Heart right ventricle (tissue), 16 donors: ENCODE measurements at regions of chr12 and their contacts with region 1.

Region 1: GRCh38 chr12:96587691-96588090 is 98.3 kb downstream of the CFAP54 start:
- DNase-seq: no peak
- ATAC-seq: no peak
- H3K4me3 ChIP-seq: no peak overlapping the region
- H3K27ac ChIP-seq: no peak overlapping the region
- H3K4me1 ChIP-seq: no peaks in the 10 kb centered on the region
- H3K27me3 ChIP-seq: no peaks in the 10 kb centered on the region
- CTCF ChIP-seq: no peak

Region 2: DNA sequence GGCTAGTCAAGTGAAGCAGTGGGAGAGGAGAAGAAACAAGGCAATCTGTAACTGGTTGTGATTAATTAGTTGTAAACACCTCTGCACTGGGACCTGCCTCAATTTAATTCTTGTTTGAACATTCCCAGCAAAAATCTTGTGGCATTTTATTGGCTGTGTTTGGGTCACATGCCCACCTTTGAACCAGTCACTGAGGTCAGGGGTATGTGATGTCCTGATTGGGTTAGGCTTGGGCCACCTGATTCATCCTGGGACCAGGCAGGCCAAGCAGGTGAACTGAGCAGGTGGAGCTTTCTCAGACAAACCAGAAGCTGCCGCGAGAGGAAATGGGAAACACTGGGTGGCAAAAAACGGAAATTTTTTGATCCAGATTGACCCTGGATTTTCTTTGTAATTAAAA is 391.8 kb after region 1 on chr12:
- intact Hi-C with region 1: loop called in 4 of 10 experiments (anchors 5 to 10 kb)
- DNase-seq: no peak
- ATAC-seq: no peak
- H3K4me3 ChIP-seq: no peak overlapping the region
- H3K27ac ChIP-seq: no peak overlapping the region
- H3K4me1 ChIP-seq: no peaks in the 10 kb centered on the region
- H3K27me3 ChIP-seq: peaks cover 0 to 15% (median under 1%) of the 10 kb centered on the region in 7 donors
- CTCF ChIP-seq: no peak

Region 3: GRCh38 chr12:97404543-97404942 is 816.9 kb after region 1 on chr12:
- intact Hi-C with region 1: loop called in 2 of 10 experiments (anchors 10 kb)
- DNase-seq: peak in 1 of 2 donors; percentile 11
- ATAC-seq: no peak
- H3K4me3 ChIP-seq: no peak overlapping the region
- H3K27ac ChIP-seq: no peak overlapping the region
- H3K4me1 ChIP-seq: no peaks in the 10 kb centered on the region
- H3K27me3 ChIP-seq: no peaks in the 10 kb centered on the region
- CTCF ChIP-seq: peak; percentile 31 to 71 (median 61)